MCF 10A (cell line): ENCODE measurements at regions of chr11 and their contacts with region 1.

Region 1: DNA sequence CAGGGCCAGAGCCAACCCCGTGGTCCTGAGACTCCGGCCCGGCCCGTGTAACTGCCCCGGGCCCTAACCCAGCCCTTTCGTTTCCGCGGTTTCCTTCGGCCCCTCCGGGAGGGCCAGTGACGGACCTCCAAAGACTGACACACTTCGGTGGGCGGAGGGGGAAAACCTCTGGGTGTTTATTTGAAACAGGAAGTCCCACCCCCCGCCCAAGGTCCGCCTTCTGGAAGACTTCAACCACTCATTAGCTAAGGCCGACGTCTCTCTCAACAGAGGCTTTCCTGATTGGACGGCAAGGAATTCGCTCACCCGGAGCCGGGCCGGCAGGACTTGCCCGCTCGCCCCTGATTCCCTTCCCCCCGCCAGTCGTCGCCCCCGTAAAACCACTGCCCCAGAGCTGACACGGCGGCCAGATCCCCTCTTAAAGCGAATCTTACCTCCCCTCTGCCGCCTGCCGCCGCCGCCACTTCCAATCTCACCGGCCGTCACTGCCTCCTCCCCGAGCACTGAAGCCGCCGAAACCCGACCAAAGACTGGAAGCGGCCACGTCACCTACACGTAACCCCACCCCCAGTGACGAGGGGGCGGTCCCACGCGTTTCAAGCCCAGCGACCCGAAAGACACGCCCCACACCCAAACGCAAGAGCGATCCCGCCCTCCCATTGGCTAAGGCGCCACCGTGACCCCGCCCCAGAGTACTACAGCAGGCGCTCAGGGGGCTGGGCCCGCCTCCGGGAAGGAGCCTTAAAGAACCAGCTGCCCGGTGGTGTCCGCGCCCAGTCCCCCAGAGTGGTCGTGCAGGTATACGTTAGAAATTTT is at the start of gene STX5:
- DNase-seq: peak; percentile 98
- H3K4me3 Mint-ChIP-seq: peak within 1 kb of the TSS; percentile 89
- H3K27ac Mint-ChIP-seq: peak within 1 kb of the TSS; percentile 99
- H3K4me1 Mint-ChIP-seq: peaks cover 31% of the 10 kb centered on the region
- H3K27me3 Mint-ChIP-seq: no peaks in the 10 kb centered on the region
- CTCF ChIP-seq: no peak
- total RNA-seq, gene STX5: 71.8 and 72.0 TPM in 2 replicates

Region 2: DNA sequence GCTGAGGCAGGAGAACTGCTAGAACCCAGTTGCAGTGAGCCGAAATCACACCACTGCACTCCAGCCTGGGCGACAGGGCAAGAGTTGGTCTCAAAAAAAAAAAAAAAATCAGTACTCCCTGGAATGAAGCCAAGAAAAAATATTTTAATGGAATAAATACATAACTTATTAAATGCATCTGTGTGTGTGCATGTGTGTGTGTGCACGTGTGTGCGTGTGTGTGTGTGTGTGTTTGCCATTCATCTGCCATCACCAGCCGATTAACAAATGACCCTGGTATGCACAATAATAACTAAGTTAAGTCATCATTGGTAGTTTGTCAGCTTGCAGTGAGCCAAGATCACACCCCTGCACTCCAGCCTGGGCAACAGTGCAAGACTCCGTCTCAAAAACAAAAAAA is 447.9 kb before region 1 on chr11:
- CTCF ChIA-PET with region 1: no interaction called
- POLR2A ChIA-PET with region 1: no interaction called
- intact Hi-C with region 1: loop called (anchors 10 kb)
- DNase-seq: no peak
- H3K4me3 Mint-ChIP-seq: no peak overlapping the region
- H3K27ac Mint-ChIP-seq: no peak overlapping the region
- H3K4me1 Mint-ChIP-seq: peaks cover 10% of the 10 kb centered on the region
- H3K27me3 Mint-ChIP-seq: peaks cover 2% of the 10 kb centered on the region
- CTCF ChIP-seq: no peak

Region 3: GRCh38 chr11:62709247-62710000 is 122.3 kb before region 1 on chr11:
- CTCF ChIA-PET with region 1: no interaction called
- POLR2A ChIA-PET with region 1: no interaction called
- intact Hi-C with region 1: no loop called
- DNase-seq: peak; percentile 85
- H3K4me3 Mint-ChIP-seq: peak overlapping the region; percentile 91
- H3K27ac Mint-ChIP-seq: peak overlapping the region; percentile 98
- H3K4me1 Mint-ChIP-seq: peaks cover 25% of the 10 kb centered on the region
- H3K27me3 Mint-ChIP-seq: no peaks in the 10 kb centered on the region
- CTCF ChIP-seq: no peak

Region 4: GRCh38 chr11:62753736-62754603 is 77.8 kb before region 1 on chr11 and contains the start of gene ZBTB3:
- CTCF ChIA-PET with region 1: no interaction called
- POLR2A ChIA-PET with region 1: interaction called, 13 read pairs
- intact Hi-C with region 1: no loop called
- DNase-seq: peak; percentile 100
- H3K4me3 Mint-ChIP-seq: peak within 1 kb of the TSS; percentile 98
- H3K27ac Mint-ChIP-seq: peak within 1 kb of the TSS; percentile 96
- H3K4me1 Mint-ChIP-seq: peaks cover 3% of the 10 kb centered on the region
- H3K27me3 Mint-ChIP-seq: no peaks in the 10 kb centered on the region
- CTCF ChIP-seq: no peak
- total RNA-seq, gene ZBTB3: 7.1 and 11.6 TPM in 2 replicates

Region 5: GRCh38 chr11:62816557-62816956 is 15.2 kb before region 1 on chr11:
- CTCF ChIA-PET with region 1: interaction called, 4 read pairs
- POLR2A ChIA-PET with region 1: interaction called, 12 read pairs
- intact Hi-C with region 1: no loop called
- DNase-seq: no peak
- H3K4me3 Mint-ChIP-seq: no peak overlapping the region
- H3K27ac Mint-ChIP-seq: no peak overlapping the region
- H3K4me1 Mint-ChIP-seq: no peaks in the 10 kb centered on the region
- H3K27me3 Mint-ChIP-seq: no peaks in the 10 kb centered on the region
- CTCF ChIP-seq: no peak

Region 6: DNA sequence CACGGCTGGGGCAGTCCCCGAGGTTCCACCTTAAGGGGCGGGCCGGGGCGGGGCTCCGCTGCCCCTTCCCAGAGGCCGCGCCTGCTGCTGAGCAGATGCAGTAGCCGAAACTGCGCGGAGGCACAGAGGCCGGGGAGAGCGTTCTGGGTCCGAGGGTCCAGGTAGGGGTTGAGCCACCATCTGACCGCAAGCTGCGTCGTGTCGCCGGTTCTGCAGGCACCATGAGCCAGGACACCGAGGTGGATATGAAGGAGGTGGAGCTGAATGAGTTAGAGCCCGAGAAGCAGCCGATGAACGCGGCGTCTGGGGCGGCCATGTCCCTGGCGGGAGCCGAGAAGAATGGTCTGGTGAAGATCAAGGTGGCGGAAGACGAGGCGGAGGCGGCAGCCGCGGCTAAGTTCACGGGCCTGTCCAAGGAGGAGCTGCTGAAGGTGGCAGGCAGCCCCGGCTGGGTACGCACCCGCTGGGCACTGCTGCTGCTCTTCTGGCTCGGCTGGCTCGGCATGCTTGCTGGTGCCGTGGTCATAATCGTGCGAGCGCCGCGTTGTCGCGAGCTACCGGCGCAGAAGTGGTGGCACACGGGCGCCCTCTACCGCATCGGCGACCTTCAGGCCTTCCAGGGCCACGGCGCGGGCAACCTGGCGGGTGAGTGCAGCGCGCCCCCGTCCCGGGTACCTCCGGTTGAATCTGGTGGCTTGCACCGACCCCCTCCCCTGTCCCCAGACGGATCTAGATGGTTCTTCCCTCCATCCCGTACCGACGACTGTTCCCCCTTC is 49.3 kb after region 1 on chr11 and contains the start of gene SLC3A2:
- CTCF ChIA-PET with region 1: no interaction called
- POLR2A ChIA-PET with region 1: interaction called, 23 read pairs
- intact Hi-C with region 1: no loop called
- DNase-seq: peak; percentile 91
- H3K4me3 Mint-ChIP-seq: peak within 1 kb of the TSS; percentile 100
- H3K27ac Mint-ChIP-seq: peak within 1 kb of the TSS; percentile 99
- H3K4me1 Mint-ChIP-seq: peaks cover 47% of the 10 kb centered on the region
- H3K27me3 Mint-ChIP-seq: no peaks in the 10 kb centered on the region
- CTCF ChIP-seq: peak; percentile 70
- total RNA-seq, gene SLC3A2: 838 and 896 TPM in 2 replicates

Region 7: DNA sequence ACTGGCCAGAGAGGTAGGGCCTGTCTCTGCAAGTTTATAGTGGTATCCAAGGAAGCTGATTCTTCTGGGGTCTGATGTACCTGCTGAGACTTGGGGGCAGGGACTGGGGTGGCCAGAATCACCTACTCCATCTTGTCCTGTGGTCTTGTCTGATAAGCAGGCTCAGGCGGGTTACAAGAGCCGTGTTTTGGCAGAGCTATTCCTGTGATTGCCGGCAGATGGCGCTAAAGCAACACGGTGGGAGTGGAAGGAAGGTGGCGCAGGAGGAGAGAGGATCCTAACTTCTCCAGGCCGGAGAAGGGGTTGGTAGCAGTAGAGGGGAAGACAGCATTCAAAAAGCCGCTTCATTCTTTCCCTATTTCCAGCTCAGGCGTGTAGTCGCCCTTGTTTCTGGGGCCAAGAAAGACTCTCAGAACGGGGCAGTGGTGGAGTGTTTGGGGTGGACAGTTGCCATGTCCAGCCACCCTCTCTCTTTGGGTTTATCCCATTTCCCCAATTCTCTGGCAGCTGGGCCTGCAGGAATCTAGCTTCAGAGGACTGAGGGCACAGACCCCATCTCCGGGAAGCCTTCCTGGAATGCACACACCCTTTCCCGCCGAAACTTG is 74.3 kb after region 1 on chr11:
- CTCF ChIA-PET with region 1: no interaction called
- POLR2A ChIA-PET with region 1: no interaction called
- intact Hi-C with region 1: no loop called
- DNase-seq: peak; percentile 81
- H3K4me3 Mint-ChIP-seq: no peak overlapping the region
- H3K27ac Mint-ChIP-seq: no peak overlapping the region
- H3K4me1 Mint-ChIP-seq: peaks cover 6% of the 10 kb centered on the region
- H3K27me3 Mint-ChIP-seq: peaks cover 14% of the 10 kb centered on the region
- CTCF ChIP-seq: peak; percentile 95

Region 8: DNA sequence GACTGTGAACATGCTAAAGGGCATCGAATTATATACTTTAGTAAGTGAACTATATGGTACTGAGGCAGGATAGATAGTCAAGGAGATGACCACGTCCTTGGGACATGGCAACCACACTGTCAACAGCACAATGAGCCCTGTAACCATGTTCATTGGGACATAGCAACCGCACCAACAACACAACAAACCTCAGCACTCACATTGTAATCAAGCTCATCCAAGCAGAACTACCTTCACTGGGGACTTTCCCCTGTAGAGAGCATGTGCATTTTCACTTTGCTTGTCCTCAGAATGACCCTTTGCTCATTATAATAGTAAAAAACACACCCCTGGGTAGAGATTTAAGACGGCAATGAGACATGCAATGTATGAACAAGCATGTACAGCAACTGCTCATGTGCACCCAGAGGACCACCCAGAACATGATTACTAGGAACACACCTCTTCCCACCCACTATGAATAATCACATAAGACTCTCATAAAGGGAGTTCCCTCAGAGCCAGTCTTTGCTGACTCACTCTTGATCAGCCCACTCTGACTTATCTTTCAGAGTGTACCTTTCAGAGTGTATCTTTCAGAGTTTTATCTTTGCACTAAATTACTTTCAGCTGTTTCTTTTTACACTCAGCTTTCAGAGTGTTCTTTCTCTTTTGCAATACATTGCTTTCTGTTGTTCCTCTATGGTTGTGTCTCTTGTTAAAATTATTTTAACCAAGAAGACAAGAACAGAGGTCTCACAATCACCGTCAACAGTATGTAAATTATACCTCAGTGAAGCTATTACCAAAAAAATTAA is 735.5 kb after region 1 on chr11:
- CTCF ChIA-PET with region 1: no interaction called
- POLR2A ChIA-PET with region 1: no interaction called
- intact Hi-C with region 1: no loop called
- DNase-seq: peak; percentile 82
- H3K4me3 Mint-ChIP-seq: no peak overlapping the region
- H3K27ac Mint-ChIP-seq: peak overlapping the region; percentile 98
- H3K4me1 Mint-ChIP-seq: peaks cover 45% of the 10 kb centered on the region
- H3K27me3 Mint-ChIP-seq: no peaks in the 10 kb centered on the region
- CTCF ChIP-seq: no peak